Endothelial cell of umbilical vein (primary cell): ENCODE measurements at regions of chr14 and their contacts with region 1.

Region 1: DNA sequence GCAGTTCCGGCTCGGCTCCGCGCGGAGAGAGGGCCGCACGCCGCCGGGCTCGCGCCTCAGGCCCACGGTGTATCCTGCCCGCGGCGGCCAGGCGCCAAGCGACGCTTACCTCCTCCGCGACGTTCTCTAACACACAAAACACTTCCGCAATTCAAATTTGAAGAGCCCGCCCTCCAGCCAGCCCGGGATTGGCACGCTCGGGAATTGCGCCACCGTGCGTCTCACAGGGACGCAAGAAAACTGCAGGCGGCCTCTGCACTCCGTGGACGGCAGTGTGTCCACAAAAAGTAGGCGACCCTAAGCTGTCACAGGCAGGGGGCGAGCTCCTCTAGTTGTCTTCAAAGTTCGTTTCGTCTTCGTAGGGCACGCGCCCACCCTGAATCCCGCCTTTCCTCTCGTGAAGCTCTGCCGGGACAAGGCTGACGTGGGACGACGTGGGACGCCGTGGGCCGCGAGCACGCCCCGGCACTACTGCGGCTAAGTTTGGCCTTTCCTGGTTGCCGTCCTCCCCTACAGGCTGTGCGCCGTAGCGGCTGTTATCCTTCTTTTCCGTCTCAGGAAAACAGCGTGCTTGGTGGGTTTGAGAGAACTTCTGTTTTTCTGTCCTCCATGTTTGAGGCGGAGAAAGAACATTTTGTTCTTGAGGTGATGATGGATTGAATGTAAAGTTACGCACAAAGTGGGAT is at the start of gene MIS18BP1:
- DNase-seq: peak; percentile 98
- H3K4me3 ChIP-seq: peak within 1 kb of the TSS; percentile 79 to 96 (median 88)
- H3K27ac ChIP-seq: peak within 1 kb of the TSS; percentile 89
- H3K4me1 ChIP-seq: peaks cover 15% of the 10 kb centered on the region
- H3K27me3 ChIP-seq: no peaks in the 10 kb centered on the region
- CTCF ChIP-seq: peak; percentile 83 to 91
- POLR2A ChIP-seq: peak; percentile 79
- total RNA-seq, gene MIS18BP1: 41.1 and 43.3 TPM in 2 replicates

Region 2: DNA sequence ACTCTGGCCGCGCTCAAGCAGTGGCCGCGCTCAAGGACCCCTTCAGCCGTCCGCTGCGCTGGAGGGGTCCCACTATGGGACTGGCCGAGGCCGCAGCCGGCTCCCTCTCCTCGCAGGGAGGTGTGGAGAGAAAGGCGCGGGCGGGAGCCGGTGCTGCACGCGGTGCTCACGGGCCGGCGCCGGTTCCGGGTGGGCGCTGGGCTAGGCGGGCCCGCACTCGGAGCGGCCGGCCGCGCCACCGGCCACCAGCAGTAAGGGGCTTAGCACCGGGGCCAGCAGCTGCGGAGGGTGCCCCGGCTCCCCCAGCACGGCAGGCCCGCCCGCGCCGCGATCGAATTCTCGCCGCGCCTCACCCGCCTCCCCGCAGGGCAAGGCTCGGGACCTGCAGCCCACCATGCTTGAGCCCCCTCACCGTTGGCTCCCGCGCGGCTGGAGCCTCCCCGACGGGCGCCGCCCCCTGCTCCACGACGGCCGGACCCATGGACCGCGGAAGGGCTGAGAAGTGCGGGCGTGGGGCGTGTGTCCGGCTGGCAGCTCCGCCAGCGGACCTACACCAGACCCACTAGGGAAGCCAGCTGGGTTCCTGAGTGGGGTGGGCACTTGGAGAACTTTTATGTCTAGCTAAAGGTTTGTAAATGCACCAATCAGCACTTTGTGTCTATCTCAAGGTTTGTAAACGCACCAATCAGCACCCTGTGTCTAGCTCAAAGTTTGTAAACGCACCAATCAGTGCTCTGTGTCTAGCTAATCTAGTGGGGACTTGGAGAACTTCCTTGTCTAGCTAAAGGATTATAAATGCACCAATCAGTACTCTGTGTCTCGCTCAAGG is 341.0 kb before region 1 on chr14:
- CTCF ChIA-PET with region 1: interaction called, 18 read pairs
- POLR2A ChIA-PET with region 1: no interaction called
- dilution Hi-C with region 1: no loop called
- intact Hi-C with region 1: loop called (anchors 5 kb)
- DNase-seq: no peak
- H3K4me3 ChIP-seq: peak overlapping the region in 1 of 3 experiments; percentile 30
- H3K27ac ChIP-seq: no peak overlapping the region
- H3K4me1 ChIP-seq: no peaks in the 10 kb centered on the region
- H3K27me3 ChIP-seq: peaks cover 15 to 16% of the 10 kb centered on the region in 2 experiments
- CTCF ChIP-seq: no peak
- POLR2A ChIP-seq: no peak

Region 3: GRCh38 chr14:45003924-45004323 is 249.3 kb before region 1 on chr14:
- CTCF ChIA-PET with region 1: no interaction called
- POLR2A ChIA-PET with region 1: no interaction called
- dilution Hi-C with region 1: no loop called
- intact Hi-C with region 1: no loop called
- DNase-seq: no peak
- H3K4me3 ChIP-seq: no peak overlapping the region
- H3K27ac ChIP-seq: no peak overlapping the region
- H3K4me1 ChIP-seq: no peaks in the 10 kb centered on the region
- H3K27me3 ChIP-seq: no peaks in the 10 kb centered on the region
- CTCF ChIP-seq: no peak
- POLR2A ChIP-seq: no peak

Region 4: GRCh38 chr14:45083971-45084722 is 169.1 kb before region 1 on chr14 and contains the start of gene PRPF39:
- CTCF ChIA-PET with region 1: no interaction called
- POLR2A ChIA-PET with region 1: no interaction called
- dilution Hi-C with region 1: no loop called
- intact Hi-C with region 1: loop called (anchors 1 kb)
- DNase-seq: peak; percentile 95
- H3K4me3 ChIP-seq: peak within 1 kb of the TSS; percentile 50 to 86 (median 81)
- H3K27ac ChIP-seq: peak within 1 kb of the TSS; percentile 63
- H3K4me1 ChIP-seq: peaks cover 8% of the 10 kb centered on the region
- H3K27me3 ChIP-seq: no peaks in the 10 kb centered on the region
- CTCF ChIP-seq: no peak
- POLR2A ChIP-seq: peak; percentile 97
- total RNA-seq, gene PRPF39: 36.3 and 44.4 TPM in 2 replicates

Region 5: DNA sequence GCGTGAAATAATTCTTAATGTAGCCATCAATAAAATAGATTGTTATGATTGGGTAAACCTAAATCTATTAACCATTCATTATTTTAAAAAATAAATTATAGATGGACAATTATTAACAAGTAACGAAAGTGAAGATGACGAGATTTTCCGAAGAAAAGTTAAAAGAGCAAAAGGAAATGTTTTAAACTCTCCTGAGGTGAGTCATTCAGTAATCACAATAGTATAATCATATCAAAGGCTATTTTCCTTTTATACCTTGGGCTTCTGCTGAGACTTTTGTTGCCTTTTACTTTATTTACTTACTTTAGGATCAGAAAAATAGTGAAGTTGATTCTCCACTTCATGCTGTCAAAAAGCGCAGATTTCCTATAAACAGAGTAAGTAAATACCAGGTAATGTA is 71.9 kb before region 1 on chr14:
- CTCF ChIA-PET with region 1: interaction called, 3 read pairs
- POLR2A ChIA-PET with region 1: no interaction called
- dilution Hi-C with region 1: no loop called
- intact Hi-C with region 1: loop called (anchors 5 kb)
- DNase-seq: peak; percentile 49
- H3K4me3 ChIP-seq: peak overlapping the region in 2 of 3 experiments; percentile 13 to 48
- H3K27ac ChIP-seq: peak overlapping the region; percentile 77
- H3K4me1 ChIP-seq: peaks cover 23% of the 10 kb centered on the region
- H3K27me3 ChIP-seq: no peaks in the 10 kb centered on the region
- CTCF ChIP-seq: no peak
- POLR2A ChIP-seq: no peak

Region 6: GRCh38 chr14:45267071-45267470 is 13.9 kb after region 1 on chr14:
- CTCF ChIA-PET with region 1: interaction called, 19 read pairs
- POLR2A ChIA-PET with region 1: no interaction called
- dilution Hi-C with region 1: no loop called
- intact Hi-C with region 1: no loop called
- DNase-seq: no peak
- H3K4me3 ChIP-seq: no peak overlapping the region
- H3K27ac ChIP-seq: no peak overlapping the region
- H3K4me1 ChIP-seq: no peaks in the 10 kb centered on the region
- H3K27me3 ChIP-seq: peaks cover 3 to 6% of the 10 kb centered on the region in 2 experiments
- CTCF ChIP-seq: no peak
- POLR2A ChIP-seq: no peak

Region 7: DNA sequence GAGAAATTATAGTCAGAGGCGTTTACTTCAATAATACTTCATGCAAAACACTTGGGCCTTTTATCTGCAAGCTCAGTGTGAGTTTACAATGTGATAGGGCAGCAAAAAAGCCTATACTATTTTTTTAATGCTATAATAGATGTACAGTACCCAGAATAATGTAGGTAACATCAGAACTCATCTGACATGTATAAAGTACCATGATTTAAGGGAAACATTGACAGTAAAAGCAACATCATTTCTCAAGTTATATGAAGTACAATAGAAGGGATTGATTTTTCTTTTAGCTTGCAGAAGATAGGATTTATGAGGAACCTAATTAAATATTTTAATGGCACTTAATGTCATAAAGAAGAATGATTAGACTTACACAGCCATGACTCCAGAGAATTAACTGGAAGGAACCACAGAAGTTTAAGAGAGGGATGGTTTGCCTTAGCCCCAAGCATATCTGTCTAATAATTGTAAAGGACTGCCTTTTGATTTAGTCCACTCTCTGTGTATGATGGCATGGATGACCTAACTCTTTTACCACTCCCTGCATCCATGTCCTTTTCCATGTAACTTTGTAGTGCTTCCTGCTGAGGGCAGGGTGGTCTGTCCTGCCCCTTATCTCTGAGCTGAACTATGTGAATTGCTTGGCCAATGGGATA is 55.7 kb after region 1 on chr14:
- CTCF ChIA-PET with region 1: no interaction called
- POLR2A ChIA-PET with region 1: no interaction called
- dilution Hi-C with region 1: no loop called
- intact Hi-C with region 1: no loop called
- DNase-seq: no peak
- H3K4me3 ChIP-seq: no peak overlapping the region
- H3K27ac ChIP-seq: no peak overlapping the region
- H3K4me1 ChIP-seq: no peaks in the 10 kb centered on the region
- H3K27me3 ChIP-seq: no peaks in the 10 kb centered on the region
- CTCF ChIP-seq: no peak
- POLR2A ChIP-seq: no peak

Region 8: DNA sequence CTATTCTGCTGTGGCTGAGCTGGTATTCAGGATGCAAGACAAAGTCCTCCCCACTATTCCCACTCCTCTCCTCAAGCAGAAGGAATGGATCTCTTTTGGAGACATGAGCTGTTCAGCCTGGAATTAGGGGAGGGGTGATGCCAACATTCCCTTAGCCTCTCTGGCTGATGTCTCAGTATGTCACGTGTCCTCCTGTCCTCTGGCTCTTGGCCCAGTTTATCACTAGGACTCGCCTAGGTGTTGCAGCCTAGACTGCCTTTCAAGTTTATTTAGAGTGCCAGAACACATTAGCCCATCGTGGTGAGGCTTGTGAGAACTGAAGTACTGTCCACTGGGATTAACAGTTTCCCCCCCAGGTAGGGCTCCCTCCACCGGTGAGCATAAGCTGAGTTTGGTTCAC is 239.7 kb after region 1 on chr14:
- CTCF ChIA-PET with region 1: no interaction called
- POLR2A ChIA-PET with region 1: no interaction called
- dilution Hi-C with region 1: no loop called
- intact Hi-C with region 1: no loop called
- DNase-seq: no peak
- H3K4me3 ChIP-seq: no peak overlapping the region
- H3K27ac ChIP-seq: no peak overlapping the region
- H3K4me1 ChIP-seq: no peaks in the 10 kb centered on the region
- H3K27me3 ChIP-seq: no peaks in the 10 kb centered on the region
- CTCF ChIP-seq: no peak
- POLR2A ChIP-seq: no peak